ENCODE measurements at regions of chr1 and their contacts with region 1.

Region 1: GRCh38 chr1:48498096-48498791 is 26.2 kb upstream of the SPATA6 start:
- DNase-seq: peak; percentile 72 to 97 (median 90)

Region 2: DNA sequence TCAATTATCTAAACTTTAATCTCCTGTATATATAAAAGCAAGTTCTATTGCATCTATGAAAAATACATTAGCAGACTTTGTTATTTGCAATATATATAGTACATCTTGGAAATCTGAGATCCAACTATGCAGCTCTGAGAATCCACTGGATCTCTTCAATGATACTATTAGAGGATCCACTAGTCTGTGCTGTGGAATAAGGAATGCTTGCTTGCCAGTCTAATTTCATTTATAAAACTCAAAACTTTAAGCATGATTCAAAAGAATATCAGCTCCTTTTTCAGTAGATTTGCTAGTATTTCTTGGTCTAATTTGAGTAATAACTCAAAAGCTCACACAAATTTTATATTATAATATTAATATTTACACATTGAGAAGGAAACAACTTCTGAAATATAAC is 141.3 kb before region 1 on chr1:
- intact Hi-C with region 1: loop called (anchors 2 kb)
- DNase-seq: no peak

Region 3: DNA sequence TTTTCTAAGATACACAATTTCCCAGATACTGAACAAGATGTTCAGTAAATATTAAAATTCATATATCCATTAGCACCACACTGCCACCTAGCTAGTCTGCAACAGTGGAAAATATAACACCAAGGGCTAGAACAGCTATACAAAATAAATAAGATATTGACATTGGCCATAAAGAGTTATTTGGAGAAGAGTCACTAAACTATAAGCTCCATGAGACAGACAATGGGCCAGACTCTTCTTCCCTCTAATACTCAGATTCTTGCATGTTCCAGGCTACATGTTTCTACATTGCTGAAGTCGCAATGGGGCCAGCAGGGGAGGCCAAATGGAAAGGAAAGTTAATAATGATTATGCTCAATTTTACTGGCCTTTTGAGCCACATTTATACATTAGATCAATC is 47.7 kb before region 1 on chr1:
- intact Hi-C with region 1: loop called (anchors 1 kb)
- DNase-seq: peak in 1 of 10 donors; percentile 23

Region 4: DNA sequence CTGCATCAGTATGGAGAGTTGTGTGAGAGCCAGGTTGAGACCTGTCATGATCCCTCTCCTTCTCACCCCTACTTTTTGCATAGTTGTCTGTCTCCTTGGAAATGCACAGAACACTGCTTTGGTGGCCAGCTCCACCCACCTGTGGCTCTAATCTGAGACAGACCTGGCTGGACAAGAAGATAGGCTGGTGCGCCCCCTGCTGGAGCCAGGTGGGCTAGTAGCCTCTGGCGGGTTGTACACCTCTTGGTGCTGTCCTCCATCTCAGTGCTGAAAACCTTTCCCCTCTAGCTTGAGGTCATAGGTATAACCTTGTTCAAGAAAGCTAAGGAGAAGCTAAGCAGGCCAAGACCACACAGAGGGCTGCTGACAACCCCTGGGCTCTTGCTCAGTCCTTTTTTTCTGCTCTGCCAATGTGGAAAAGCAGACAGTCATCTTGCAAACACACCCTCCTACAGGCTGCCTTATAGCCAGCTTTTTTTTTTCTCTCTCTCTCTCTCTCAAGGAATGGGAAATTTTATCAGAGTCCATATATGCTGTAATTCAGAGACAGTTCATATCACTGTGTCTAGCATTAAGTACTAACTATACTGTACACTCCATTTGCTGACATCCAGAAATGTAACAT is 32.6 kb after region 1 on chr1:
- intact Hi-C with region 1: loop called (anchors 1 kb)
- DNase-seq: peak in 9 of 10 donors; percentile 30 to 93 (median 56)